ENCODE measurements at regions of chr9 and their contacts with region 1.

Region 1: DNA sequence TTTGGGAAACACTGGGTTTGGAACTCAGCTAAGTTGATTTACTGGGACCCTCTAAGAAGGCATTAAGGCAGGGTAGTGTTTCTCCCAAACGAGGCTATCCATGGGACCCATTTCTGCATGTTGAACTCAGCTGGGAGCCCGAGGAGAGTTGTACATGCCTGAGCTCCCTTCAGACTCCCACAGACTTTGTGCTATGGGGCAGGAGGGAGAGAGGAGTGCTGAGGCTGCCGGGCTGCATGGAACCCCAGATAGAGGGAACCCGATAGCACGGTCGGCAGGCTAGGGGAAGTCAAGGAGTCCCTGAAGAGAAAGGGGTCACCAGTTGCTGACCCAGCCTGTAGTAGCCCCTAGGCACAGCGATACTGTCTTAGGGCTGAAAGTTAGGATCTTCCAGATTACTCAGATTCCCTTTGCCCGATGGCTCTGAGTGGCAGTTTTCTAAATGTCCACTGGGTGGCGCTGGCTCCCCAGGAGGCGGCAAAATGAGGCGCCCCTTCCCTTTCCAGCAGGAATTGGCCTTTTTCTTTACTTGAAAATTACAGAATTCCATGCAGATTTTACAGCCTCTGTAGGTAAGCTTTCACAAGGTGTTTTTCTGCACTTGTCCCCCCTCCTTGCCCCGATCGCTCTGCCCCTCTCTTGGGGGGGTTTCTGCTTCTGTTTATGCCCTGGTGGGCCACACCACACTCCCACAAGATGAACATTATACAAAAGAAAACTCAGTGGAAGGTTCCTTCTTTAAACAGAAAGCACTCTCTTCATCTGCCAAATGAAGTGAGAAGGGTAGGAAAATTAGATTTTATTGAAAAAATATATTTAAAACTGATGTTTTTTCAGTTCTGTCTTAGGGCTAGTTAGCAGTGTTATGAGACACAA is 17.8 kb downstream of the NANS start:
- DNase-seq: peak; percentile 70
- H3K4me3 Mint-ChIP-seq: no peak overlapping the region
- H3K27ac Mint-ChIP-seq: peak overlapping the region; percentile 91
- H3K4me1 Mint-ChIP-seq: peaks cover 45% of the 10 kb centered on the region
- H3K27me3 Mint-ChIP-seq: no peaks in the 10 kb centered on the region

Region 2: DNA sequence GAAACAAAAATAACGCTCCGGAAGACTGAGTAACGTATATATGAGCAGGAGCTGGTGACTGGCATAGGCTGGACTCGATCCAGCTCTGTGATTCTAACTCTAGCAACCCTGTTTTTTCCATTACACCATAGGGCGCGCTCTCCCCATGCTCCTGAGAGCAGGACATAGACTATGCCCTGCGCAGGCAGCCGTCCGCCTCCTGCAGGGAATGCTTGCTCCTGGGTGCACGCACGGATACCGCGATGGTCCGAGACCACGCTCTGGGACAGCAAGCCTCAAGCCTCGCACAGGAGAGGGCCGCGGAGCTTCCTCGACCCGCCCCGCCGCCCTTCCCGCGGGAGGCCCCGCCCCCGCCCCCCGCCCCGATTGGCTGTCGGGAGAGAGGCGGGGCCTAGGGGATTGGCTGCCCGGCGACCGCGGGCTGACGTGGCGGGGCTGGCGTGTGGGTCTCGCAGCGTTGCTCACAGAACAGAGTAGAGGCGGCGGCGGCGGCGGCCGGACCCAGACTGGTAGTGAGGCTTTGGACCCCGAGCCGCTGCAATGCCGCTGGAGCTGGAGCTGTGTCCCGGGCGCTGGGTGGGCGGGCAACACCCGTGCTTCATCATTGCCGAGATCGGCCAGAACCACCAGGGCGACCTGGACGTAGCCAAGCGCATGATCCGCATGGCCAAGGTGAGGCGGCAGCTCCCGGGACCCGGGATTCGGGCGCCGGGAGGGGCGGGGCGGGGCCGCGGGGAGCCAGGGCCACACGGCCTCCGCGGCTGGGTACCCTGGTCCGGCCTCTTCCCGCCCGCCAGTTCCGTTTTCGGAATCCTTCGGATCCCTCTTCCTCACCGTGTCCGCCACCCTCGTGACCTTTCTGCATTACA is 17.9 kb before region 1 on chr9 and contains the start of gene NANS:
- CTCF ChIA-PET with region 1: interaction called, 14 read pairs
- POLR2A ChIA-PET with region 1: no interaction called
- DNase-seq: peak; percentile 94
- H3K4me3 Mint-ChIP-seq: peak within 1 kb of the TSS; percentile 93
- H3K27ac Mint-ChIP-seq: peak within 1 kb of the TSS; percentile 96
- H3K4me1 Mint-ChIP-seq: peaks cover 35% of the 10 kb centered on the region
- H3K27me3 Mint-ChIP-seq: no peaks in the 10 kb centered on the region
- total RNA-seq, gene NANS: 37.2 to 38.3 TPM

Region 3: GRCh38 chr9:98097836-98098235 is 23.5 kb after region 1 on chr9:
- CTCF ChIA-PET with region 1: interaction called, 10 read pairs
- POLR2A ChIA-PET with region 1: no interaction called
- DNase-seq: peak; percentile 34
- H3K4me3 Mint-ChIP-seq: no peak overlapping the region
- H3K27ac Mint-ChIP-seq: peak overlapping the region; percentile 19
- H3K4me1 Mint-ChIP-seq: peaks cover 72% of the 10 kb centered on the region
- H3K27me3 Mint-ChIP-seq: no peaks in the 10 kb centered on the region

Region 4: DNA sequence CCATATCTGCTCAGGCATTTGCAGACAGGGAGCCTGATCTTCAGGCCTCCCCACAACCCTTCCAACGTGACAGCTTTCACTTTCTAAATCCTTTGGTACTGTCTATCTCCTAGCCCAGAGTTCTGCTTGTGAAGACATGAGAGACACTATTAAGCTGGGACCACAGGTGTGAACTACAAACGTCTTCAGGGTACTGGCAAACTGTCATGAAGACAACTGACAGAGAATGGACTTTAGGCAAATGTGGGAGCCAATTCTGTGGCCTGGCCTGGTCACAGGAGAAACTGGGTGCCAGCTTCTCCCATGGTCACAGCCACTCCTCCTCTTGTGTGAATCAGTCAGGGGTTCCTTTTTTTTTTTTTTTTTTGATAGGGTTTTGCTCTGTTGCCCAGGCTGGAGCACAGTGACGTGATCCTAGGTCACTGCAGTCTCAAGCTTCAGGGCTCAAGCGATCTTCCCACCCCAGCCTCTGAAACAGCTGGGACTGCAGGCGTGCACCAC is 34.2 kb after region 1 on chr9:
- CTCF ChIA-PET with region 1: no interaction called
- POLR2A ChIA-PET with region 1: no interaction called
- DNase-seq: peak; percentile 73
- H3K4me3 Mint-ChIP-seq: peak overlapping the region; percentile 55
- H3K27ac Mint-ChIP-seq: peak overlapping the region; percentile 96
- H3K4me1 Mint-ChIP-seq: peaks cover 91% of the 10 kb centered on the region
- H3K27me3 Mint-ChIP-seq: no peaks in the 10 kb centered on the region

Region 5: GRCh38 chr9:98255578-98256296 is 181.4 kb after region 1 on chr9 and contains the start of gene TBC1D2:
- CTCF ChIA-PET with region 1: interaction called, 18 read pairs
- POLR2A ChIA-PET with region 1: no interaction called
- DNase-seq: peak; percentile 97
- H3K4me3 Mint-ChIP-seq: peak within 1 kb of the TSS; percentile 90
- H3K27ac Mint-ChIP-seq: peak within 1 kb of the TSS; percentile 98
- H3K4me1 Mint-ChIP-seq: peaks cover 33% of the 10 kb centered on the region
- H3K27me3 Mint-ChIP-seq: no peaks in the 10 kb centered on the region
- total RNA-seq, gene TBC1D2: 8.3 to 8.7 TPM

Measured in activated CD4-positive, alpha-beta T cell treated with anti-CD3 and anti-CD28 coated beads, Interleukin-2, amount 10 ng/mL, durations not matched to agents 7 days and 5 days (primary cell).